ENCODE measurements at regions of chr9 and their contacts with region 1.

Region 1: DNA sequence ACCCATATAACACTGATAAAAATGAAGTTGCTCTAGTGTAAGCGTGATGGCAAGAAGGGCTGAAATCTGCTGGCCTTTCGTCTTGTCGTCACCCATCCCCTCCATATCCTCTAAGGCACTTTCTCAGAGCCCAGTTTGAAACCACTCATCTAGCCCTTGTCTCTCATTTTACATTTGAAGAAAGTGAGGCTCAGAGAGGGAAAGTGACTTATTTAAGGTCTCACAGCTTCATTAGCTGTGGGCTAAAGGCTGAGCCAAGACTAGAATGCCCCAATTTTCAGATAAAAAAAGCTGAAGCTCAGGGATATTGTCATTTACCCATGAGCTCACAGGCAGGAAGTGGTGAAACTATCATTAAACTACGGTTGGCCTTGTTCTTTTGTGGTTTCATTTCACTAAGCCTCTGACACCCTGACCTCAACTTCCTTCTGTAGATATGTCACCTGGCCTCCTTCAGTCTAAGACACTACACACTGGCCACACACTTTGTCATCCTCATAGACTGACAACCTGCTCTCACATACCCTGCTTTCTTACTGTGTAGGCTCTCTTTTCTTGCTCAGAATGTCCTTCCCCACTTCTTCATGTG is 176.7 kb upstream of the DMAC1 start:
- DNase-seq: peak; percentile 75
- ATAC-seq: peak; percentile 92
- H3K4me3 Mint-ChIP-seq: peak overlapping the region; percentile 42
- H3K27ac Mint-ChIP-seq: peak overlapping the region; percentile 88
- H3K4me1 Mint-ChIP-seq: peaks cover 71% of the 10 kb centered on the region
- H3K27me3 Mint-ChIP-seq: no peaks in the 10 kb centered on the region
- CTCF ChIP-seq: no peak

Region 2: DNA sequence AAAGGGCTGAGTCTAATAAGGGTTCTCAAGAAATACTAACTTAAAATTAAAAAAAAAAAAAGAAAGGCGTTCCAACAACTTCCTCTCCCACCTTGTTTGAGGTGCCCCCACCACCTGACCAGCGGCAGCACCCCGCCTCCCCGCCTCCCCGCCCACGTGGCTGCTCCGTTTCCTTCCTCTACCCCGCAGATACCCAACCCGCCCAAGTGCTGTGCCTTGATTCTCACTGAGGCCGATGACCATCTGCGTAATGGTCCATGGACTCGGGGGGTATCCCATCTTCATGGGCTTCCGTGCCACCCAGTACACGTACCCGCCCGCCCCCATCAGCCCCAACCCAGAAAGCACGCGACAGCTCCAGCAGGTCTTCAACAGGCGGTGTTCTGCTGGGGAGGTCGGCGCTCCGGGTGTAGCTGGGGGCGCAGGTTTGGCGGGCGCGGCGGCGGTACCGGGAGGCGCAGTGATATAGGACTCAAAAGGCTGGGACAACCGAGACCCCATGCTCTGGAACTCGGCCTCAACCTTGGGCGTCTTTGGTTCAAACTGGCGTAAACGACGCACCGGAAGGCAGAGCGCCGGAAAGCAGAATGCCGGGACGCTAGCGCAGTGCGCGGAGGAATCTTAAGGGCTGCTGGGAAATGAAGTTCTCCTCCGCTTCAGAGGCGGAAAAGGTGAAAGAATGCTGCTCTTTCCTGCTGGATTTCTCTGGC is 176.9 kb before region 1 on chr9 and contains the start of gene DMAC1:
- CTCF ChIA-PET with region 1: no interaction called
- POLR2A ChIA-PET with region 1: no interaction called
- intact Hi-C with region 1: loop called (anchors 5 kb)
- DNase-seq: peak; percentile 84
- ATAC-seq: peak; percentile 93
- H3K4me3 Mint-ChIP-seq: peak within 1 kb of the TSS; percentile 95
- H3K27ac Mint-ChIP-seq: peak within 1 kb of the TSS; percentile 97
- H3K4me1 Mint-ChIP-seq: peaks cover 30% of the 10 kb centered on the region
- H3K27me3 Mint-ChIP-seq: no peaks in the 10 kb centered on the region
- CTCF ChIP-seq: no peak
- total RNA-seq, gene DMAC1: 58.6 to 61.0 TPM

Region 3: GRCh38 chr9:7935681-7936080 is 40.6 kb before region 1 on chr9:
- CTCF ChIA-PET with region 1: interaction called, 3 read pairs
- POLR2A ChIA-PET with region 1: no interaction called
- intact Hi-C with region 1: loop called (anchors 5 kb)
- DNase-seq: no peak
- ATAC-seq: peak; percentile 81
- H3K4me3 Mint-ChIP-seq: peak overlapping the region; percentile 27
- H3K27ac Mint-ChIP-seq: peak overlapping the region; percentile 81
- H3K4me1 Mint-ChIP-seq: peaks cover 22% of the 10 kb centered on the region
- H3K27me3 Mint-ChIP-seq: no peaks in the 10 kb centered on the region
- CTCF ChIP-seq: no peak

Region 4: GRCh38 chr9:8115570-8115969 is 139.3 kb after region 1 on chr9:
- CTCF ChIA-PET with region 1: no interaction called
- POLR2A ChIA-PET with region 1: no interaction called
- intact Hi-C with region 1: loop called (anchors 10 kb)
- DNase-seq: peak; percentile 8
- ATAC-seq: peak; percentile 70
- H3K4me3 Mint-ChIP-seq: no peak overlapping the region
- H3K27ac Mint-ChIP-seq: no peak overlapping the region
- H3K4me1 Mint-ChIP-seq: peaks cover 16% of the 10 kb centered on the region
- H3K27me3 Mint-ChIP-seq: no peaks in the 10 kb centered on the region
- CTCF ChIP-seq: no peak